ENCODE measurements at regions of chr1 and their contacts with region 1.

Region 1: GRCh38 chr1:44002606-44003157 is 11.3 kb downstream of the CCDC24 start:
- DNase-seq: no peak
- ATAC-seq: no peak
- H3K4me3 Mint-ChIP-seq: no peak overlapping the region
- H3K27ac Mint-ChIP-seq: no peak overlapping the region
- H3K4me1 Mint-ChIP-seq: no peaks in the 10 kb centered on the region
- H3K27me3 Mint-ChIP-seq: no peaks in the 10 kb centered on the region

Region 2: DNA sequence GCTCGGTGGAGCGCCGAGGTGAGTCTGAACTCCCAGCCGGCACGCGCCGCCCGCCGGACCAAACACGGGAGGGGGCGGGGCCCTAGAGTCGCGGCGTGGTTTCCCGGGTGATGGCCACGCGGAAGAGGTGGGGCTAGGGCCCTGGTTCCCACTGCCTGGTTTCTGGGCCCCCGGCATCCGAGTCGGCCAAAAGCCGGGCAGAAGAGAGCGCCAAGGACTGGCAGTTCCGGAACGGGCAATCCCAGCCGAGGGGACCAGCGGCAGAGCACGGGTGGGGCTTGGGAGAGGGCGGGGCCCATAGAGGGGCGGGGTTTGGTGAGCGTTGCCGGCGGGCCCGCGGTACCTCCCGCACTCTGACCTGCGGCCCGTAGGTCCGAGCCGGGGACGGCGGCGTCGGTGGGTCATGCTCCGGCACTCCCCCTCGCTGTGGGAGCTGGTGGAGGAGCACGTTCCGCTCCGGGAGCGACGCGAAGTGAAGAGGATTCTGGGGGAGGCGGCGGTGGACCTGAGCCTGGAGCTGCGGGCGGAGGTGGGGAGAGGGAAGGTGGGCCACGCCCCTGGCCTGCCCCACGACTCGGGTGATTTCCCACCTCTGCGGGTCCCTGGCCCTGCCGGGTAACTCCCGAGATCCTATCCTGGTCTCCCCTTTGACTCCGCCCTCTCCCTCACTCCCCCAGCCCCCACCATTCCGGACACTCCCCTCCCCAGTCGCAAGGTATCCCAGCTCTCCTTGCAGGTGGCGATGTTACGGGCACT is 11.0 kb before region 1 on chr1 and contains the start of gene CCDC24:
- CTCF ChIA-PET with region 1: interaction called, 21 read pairs
- POLR2A ChIA-PET with region 1: no interaction called
- intact Hi-C with region 1: no loop called
- DNase-seq: peak; percentile 82
- ATAC-seq: peak; percentile 82
- H3K4me3 Mint-ChIP-seq: peak within 1 kb of the TSS; percentile 79
- H3K27ac Mint-ChIP-seq: peak within 1 kb of the TSS; percentile 65
- H3K4me1 Mint-ChIP-seq: peaks cover 8% of the 10 kb centered on the region
- H3K27me3 Mint-ChIP-seq: no peaks in the 10 kb centered on the region
- total RNA-seq, gene CCDC24: 1.2 to 2.0 TPM

Region 3: DNA sequence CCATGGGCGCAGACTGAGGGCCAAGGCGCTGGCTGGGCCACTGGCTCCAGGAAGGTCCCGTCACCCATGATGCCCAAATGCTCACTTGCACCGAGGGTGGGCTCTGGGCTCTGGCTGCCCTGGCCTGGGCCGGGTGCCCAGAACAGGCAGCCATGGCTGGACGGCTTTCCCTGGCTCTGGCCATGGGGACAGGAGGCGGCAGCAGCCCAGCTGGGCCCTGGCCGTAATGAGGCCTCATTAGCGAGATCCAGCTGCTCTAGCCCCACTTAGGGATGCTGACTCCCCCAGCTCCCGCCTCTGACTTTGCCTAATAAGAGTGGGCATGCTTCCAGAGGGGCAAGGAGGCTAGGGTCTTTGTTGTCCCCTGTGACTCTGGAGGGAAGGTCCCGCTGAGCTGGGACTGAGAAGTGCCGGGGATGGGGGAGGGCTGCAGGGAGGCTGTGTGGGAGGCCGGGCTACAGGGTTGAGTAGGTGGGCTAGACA is 16.8 kb after region 1 on chr1:
- CTCF ChIA-PET with region 1: interaction called, 12 read pairs
- POLR2A ChIA-PET with region 1: no interaction called
- intact Hi-C with region 1: no loop called
- DNase-seq: no peak
- ATAC-seq: no peak
- H3K4me3 Mint-ChIP-seq: no peak overlapping the region
- H3K27ac Mint-ChIP-seq: no peak overlapping the region
- H3K4me1 Mint-ChIP-seq: no peaks in the 10 kb centered on the region
- H3K27me3 Mint-ChIP-seq: no peaks in the 10 kb centered on the region

Region 4: GRCh38 chr1:44036409-44037139 is 33.9 kb after region 1 on chr1:
- CTCF ChIA-PET with region 1: interaction called, 66 read pairs
- POLR2A ChIA-PET with region 1: no interaction called
- intact Hi-C with region 1: loop called (anchors 1 kb)
- DNase-seq: peak; percentile 85
- ATAC-seq: peak; percentile 89
- H3K4me3 Mint-ChIP-seq: no peak overlapping the region
- H3K27ac Mint-ChIP-seq: no peak overlapping the region
- H3K4me1 Mint-ChIP-seq: peaks cover 5% of the 10 kb centered on the region
- H3K27me3 Mint-ChIP-seq: no peaks in the 10 kb centered on the region

Region 5: DNA sequence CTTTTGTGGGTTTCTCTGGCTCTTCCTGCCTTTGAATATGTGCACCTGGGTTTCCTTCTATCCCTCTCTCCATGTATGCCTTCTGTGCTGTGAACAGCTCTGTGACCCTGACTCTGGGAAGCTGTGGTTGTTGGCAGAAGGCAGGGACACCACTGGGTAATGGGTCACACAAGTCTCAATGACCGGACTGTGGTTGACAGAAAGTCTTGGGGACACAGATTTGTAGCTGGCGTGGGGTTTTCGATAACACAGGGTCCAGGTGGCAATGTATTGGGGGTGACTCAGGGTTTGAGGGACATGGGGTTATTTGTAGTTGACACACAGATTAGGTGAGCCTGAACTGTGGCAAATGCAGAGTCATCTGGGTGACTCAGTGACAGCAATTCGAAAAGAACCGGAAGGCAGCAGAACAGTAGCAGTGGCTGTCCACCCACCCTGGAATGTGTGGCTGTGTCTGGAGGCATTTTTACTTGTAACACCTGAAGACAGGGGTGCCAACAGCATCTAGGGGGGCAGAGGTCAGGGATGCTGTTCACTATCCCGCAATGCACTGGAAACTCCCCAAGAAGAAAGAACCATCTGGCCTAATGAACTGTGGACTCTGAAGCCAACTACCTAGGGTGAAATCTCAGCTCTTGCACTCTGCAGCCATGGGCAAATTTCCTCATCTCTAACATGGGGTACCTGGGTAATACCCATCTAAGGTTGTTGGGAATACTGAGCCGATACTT is 41.6 kb after region 1 on chr1:
- CTCF ChIA-PET with region 1: interaction called, 61 read pairs
- POLR2A ChIA-PET with region 1: no interaction called
- intact Hi-C with region 1: loop called (anchors 1 kb)
- DNase-seq: no peak
- ATAC-seq: no peak
- H3K4me3 Mint-ChIP-seq: no peak overlapping the region
- H3K27ac Mint-ChIP-seq: no peak overlapping the region
- H3K4me1 Mint-ChIP-seq: peaks cover 21% of the 10 kb centered on the region
- H3K27me3 Mint-ChIP-seq: peaks cover 7% of the 10 kb centered on the region

Region 6: GRCh38 chr1:44049839-44050238 is 47.2 kb after region 1 on chr1:
- CTCF ChIA-PET with region 1: interaction called, 61 read pairs
- POLR2A ChIA-PET with region 1: no interaction called
- intact Hi-C with region 1: loop called (anchors 1 kb)
- DNase-seq: no peak
- ATAC-seq: no peak
- H3K4me3 Mint-ChIP-seq: no peak overlapping the region
- H3K27ac Mint-ChIP-seq: no peak overlapping the region
- H3K4me1 Mint-ChIP-seq: peaks cover 21% of the 10 kb centered on the region
- H3K27me3 Mint-ChIP-seq: peaks cover 8% of the 10 kb centered on the region

Measured in activated CD4-positive, alpha-beta T cell treated with anti-CD3 and anti-CD28 coated beads for 36 hours (primary cell).